Activated CD4-positive, alpha-beta memory T cell treated with anti-CD3 and anti-CD28 coated beads for 36 hours (primary cell): ENCODE measurements at regions of chr6 and their contacts with region 1.

Region 1: DNA sequence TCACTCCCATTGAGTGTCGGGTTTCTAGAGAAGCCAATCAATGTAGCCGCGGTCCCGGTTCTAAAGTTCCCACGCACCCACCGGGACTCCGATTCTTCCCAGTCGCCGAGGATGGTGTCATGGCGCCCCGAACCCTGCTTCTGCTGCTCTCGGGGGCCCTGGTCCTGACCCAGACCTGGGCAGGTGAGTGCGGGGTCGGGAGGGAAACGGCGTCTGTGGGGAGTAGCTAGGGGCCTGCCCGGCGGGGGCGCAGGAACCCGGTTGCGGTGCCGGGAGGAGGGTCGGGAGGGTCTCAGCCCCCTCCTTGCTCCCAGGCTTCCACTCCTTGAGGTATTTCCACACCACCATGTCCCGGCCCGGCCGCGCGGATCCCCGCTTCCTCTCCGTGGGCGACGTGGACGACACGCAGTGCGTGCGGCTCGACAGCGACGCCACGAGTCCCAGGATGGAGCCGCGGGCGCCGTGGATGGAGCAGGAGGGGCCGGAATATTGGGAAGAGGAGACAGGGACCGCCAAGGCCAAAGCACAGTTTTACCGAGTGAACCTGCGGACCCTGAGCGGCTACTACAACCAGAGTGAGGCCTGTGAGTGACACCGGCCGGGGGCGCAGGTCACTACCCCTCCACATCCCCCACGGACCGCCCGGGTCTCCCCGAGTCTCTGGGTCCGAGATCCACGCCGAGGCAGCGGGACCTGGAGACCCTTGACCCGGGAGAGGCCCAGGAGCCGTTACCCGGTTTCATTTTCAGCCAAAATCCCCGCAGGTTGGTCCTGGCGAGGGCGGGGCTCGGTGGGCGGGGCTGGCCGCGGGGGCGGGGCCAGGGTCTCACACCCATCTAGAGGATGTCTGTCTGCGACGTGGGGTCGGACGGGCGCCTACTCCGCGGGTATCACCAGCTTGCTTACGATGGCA is 35.2 kb upstream of the HLA-G start:
- DNase-seq: peak; percentile 84
- H3K4me3 Mint-ChIP-seq: peak overlapping the region; percentile 81
- H3K27ac Mint-ChIP-seq: no peak overlapping the region
- H3K4me1 Mint-ChIP-seq: peaks cover 18% of the 10 kb centered on the region
- H3K27me3 Mint-ChIP-seq: peaks cover 22% of the 10 kb centered on the region

Region 2: DNA sequence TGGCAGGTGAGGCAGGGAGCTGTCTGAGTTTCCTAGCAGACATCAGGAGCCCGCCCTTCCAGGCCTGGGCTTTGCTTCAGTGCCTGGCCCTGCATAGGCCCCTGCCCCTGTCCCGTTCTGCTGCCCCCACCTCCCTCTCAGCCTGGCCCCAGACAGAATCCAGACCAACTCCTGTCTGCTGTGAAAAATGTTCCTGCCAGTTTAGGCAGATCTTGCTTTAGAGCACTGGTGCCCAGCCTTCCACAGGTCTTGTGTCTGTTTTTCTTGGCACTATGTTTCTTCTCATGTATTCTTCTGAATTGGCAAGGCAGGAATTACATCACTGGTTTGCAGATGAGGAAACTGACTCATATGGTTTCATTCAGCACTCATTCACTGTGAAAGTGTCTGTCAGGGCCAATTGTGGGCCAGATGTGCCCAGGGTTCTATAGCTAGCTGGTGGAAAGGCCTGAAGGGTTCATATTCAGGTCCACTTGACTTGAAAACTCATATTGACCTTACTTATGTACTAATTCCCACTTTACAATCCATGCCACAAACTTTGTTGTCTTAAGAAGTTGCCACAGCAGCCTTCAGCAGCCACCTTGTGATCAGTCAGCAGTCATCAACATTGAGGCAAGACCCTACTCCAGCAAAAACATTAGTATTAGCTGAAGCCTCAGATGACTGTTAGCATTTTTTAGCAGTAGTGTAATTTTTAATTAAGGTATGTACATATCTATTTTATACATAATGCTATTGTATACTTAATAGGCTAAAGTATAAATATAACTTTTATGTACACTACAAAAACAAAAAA is 28.7 kb before region 1 on chr6:
- CTCF ChIA-PET with region 1: no interaction called
- POLR2A ChIA-PET with region 1: no interaction called
- intact Hi-C with region 1: loop called (anchors 5 kb)
- DNase-seq: peak; percentile 55
- H3K4me3 Mint-ChIP-seq: no peak overlapping the region
- H3K27ac Mint-ChIP-seq: peak overlapping the region; percentile 43
- H3K4me1 Mint-ChIP-seq: peaks cover 10% of the 10 kb centered on the region
- H3K27me3 Mint-ChIP-seq: no peaks in the 10 kb centered on the region

Region 3: GRCh38 chr6:29777310-29777709 is 15.1 kb before region 1 on chr6:
- CTCF ChIA-PET with region 1: no interaction called
- POLR2A ChIA-PET with region 1: no interaction called
- intact Hi-C with region 1: no loop called
- DNase-seq: no peak
- H3K4me3 Mint-ChIP-seq: no peak overlapping the region
- H3K27ac Mint-ChIP-seq: no peak overlapping the region
- H3K4me1 Mint-ChIP-seq: no peaks in the 10 kb centered on the region
- H3K27me3 Mint-ChIP-seq: peaks cover 28% of the 10 kb centered on the region

Region 4: GRCh38 chr6:29948277-29948676 is 155.9 kb after region 1 on chr6:
- CTCF ChIA-PET with region 1: no interaction called
- POLR2A ChIA-PET with region 1: no interaction called
- intact Hi-C with region 1: loop called (anchors 2 kb)
- DNase-seq: no peak
- H3K4me3 Mint-ChIP-seq: no peak overlapping the region
- H3K27ac Mint-ChIP-seq: peak overlapping the region; percentile 18
- H3K4me1 Mint-ChIP-seq: peaks cover 36% of the 10 kb centered on the region
- H3K27me3 Mint-ChIP-seq: no peaks in the 10 kb centered on the region

Region 5: DNA sequence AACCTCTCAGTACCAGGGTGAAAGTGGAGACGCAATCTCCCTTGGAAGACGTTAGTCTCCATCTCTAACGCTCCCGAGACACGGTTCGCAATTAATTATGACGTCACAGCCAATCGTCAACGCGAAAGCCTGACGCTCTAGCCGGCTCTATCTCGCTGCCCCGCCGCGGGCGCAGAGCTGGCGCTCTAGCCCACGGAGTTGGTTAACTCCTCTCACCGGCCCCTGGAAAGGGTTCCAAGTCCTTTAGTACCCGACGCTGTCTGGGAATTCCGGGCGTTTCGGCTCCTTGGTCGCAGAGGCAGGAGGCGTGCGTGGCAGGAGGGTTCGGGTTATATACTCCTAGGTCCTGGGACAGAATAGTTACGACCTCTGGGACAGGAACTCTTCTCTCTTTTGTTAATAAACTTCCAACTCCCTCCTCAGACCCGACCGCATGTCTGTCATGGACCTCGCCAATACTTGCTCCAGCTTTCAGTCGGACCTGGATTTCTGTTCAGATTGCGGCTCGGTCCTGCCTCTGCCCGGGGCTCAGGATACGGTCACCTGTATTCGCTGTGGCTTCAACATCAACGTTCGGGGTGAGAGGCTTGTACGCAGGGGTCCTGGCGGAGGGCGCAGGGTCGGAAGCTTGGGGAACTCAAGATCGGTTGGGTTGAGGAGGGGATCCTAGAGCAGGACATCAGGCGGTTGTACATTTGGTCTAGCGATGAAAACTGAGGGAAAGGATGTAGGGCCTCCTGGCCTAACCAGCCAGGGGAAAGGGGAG is 268.9 kb after region 1 on chr6 and contains the start of gene POLR1H:
- CTCF ChIA-PET with region 1: no interaction called
- POLR2A ChIA-PET with region 1: no interaction called
- intact Hi-C with region 1: no loop called
- DNase-seq: peak; percentile 92
- H3K4me3 Mint-ChIP-seq: peak within 1 kb of the TSS; percentile 99
- H3K27ac Mint-ChIP-seq: peak within 1 kb of the TSS; percentile 99
- H3K4me1 Mint-ChIP-seq: peaks cover 35% of the 10 kb centered on the region
- H3K27me3 Mint-ChIP-seq: no peaks in the 10 kb centered on the region
- total RNA-seq, gene POLR1H: 69.4 to 73.2 TPM